Ascending aorta (tissue), 2 donors: ENCODE measurements at regions of chr3 and their contacts with region 1.

Region 1: DNA sequence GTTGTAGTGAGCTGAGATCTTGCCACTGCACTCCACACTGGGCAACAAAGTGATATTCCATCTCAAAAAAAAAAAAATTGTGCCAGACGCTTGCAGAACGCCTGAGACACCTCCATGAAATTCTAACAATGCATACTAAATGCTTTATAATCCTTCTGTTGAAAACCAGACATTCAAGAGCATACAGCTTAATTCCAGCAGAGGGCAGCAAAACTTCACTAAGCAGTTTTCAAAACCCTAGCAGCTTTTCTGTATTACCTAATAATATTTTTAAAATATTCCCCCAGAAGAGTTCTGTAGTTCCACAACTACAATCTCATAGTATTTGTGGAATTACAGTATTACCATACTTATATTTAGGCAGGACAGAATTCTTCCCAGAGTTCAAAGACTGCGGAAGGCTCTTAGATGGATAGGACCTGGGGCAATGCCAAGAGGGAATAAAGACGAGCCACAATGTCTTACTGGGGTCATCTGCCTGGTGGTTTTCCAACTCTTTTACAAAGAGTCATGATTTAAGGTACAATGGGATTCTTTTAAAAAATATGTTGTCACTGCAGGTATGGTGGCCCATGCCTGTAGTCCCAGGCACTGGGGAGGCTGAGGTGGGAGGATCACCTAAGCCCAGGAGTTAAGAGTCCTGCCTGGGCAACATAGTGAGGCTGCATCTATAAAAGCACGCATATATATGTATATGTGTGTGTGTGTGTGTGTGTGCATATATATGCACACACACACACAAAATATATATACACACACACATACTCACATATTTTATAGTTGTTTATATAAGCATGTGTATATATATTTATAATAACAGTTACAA is 19.6 kb upstream of the TASOR start:
- DNase-seq: peak in 1 of 2 donors; percentile 70
- H3K4me3 ChIP-seq: no peak overlapping the region
- H3K27ac ChIP-seq: no peak overlapping the region
- H3K4me1 ChIP-seq: no peaks in the 10 kb centered on the region
- H3K27me3 ChIP-seq: no peaks in the 10 kb centered on the region
- CTCF ChIP-seq: peak; percentile 74 to 91 (median 86)

Region 2: GRCh38 chr3:56468184-56469106 is 234.3 kb before region 1 on chr3 and contains the start of gene ERC2:
- intact Hi-C with region 1: no loop called
- DNase-seq: no peak
- H3K4me3 ChIP-seq: peak within 1 kb of the TSS; percentile 53 to 61
- H3K27ac ChIP-seq: no peak within 1 kb of the TSS
- H3K4me1 ChIP-seq: peaks cover 0 to 5% of the 10 kb centered on the region in 2 donors
- H3K27me3 ChIP-seq: no peaks in the 10 kb centered on the region
- CTCF ChIP-seq: no peak
- total RNA-seq, gene ERC2: 0.11 TPM

Region 3: GRCh38 chr3:56633602-56634535 is 68.8 kb before region 1 on chr3:
- intact Hi-C with region 1: no loop called
- DNase-seq: no peak
- H3K4me3 ChIP-seq: no peak overlapping the region
- H3K27ac ChIP-seq: no peak overlapping the region
- H3K4me1 ChIP-seq: no peaks in the 10 kb centered on the region
- H3K27me3 ChIP-seq: no peaks in the 10 kb centered on the region
- CTCF ChIP-seq: no peak

Region 4: GRCh38 chr3:56682462-56683121 is 20.1 kb before region 1 on chr3:
- intact Hi-C with region 1: no loop called
- DNase-seq: peak in 1 of 2 donors; percentile 82
- H3K4me3 ChIP-seq: peak overlapping the region; percentile 74 to 82
- H3K27ac ChIP-seq: peak overlapping the region; percentile 95 to 99
- H3K4me1 ChIP-seq: peaks cover 0 to 3% of the 10 kb centered on the region in 2 donors
- H3K27me3 ChIP-seq: no peaks in the 10 kb centered on the region
- CTCF ChIP-seq: no peak

Region 5: DNA sequence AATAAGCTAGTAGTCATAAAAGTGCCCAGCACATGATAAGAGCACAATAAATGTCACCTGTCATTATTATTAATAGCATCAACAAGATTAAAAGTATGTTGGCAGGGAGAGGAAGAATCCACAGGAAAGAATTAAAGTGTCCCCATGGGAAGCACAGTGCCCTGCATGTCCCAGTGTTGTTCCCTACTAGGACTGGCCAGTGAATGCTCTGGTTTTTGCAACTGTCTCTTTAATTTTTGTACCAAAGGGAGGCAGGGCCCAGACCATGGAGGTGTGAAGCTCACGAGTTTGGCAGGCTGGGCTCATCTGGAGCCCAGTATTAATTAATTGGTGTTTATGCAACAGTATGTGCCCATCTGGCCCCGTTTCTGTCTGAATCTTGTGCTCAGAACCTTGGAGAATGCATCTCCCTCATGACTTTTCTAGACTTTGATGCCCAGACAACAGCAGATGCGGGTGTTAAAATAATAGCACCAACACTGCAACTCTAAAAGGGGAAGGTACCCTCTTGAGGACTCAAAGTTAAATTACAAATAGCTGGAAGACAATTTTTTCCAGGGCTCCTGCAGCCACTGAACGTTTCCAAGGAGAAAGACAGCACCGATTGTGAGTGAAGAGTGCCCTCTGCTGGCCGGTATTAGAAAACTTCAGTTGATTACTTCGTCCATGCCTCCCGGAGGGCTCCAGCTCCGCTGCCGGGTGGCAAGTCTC is 285.9 kb after region 1 on chr3:
- intact Hi-C with region 1: loop called (anchors 1 kb)
- DNase-seq: peak in 1 of 2 donors; percentile 84
- H3K4me3 ChIP-seq: no peak overlapping the region
- H3K27ac ChIP-seq: no peak overlapping the region
- H3K4me1 ChIP-seq: peaks cover 0 to 10% of the 10 kb centered on the region in 2 donors
- H3K27me3 ChIP-seq: no peaks in the 10 kb centered on the region
- CTCF ChIP-seq: peak; percentile 72 to 88 (median 73)

Region 6: DNA sequence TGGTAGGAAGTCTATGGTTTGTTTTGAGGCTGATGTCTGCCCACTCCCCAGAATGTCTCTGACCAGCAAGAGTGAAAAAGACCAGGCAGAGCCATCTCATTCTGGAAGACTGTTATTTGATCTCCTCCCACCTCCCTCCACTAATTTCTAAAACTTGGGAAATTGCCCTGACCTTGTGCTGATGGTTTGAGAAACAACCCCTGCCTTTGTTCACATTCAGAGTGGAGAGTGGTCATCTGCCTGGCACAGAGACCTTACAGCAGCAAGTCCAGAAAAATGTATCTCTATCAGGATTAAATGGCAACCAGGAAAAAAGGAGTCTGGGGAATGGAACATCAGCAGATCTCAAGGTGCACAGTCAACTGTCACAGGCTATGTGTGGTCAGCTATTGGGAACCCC is 383.5 kb after region 1 on chr3:
- intact Hi-C with region 1: loop called (anchors 10 kb)
- DNase-seq: no peak
- H3K4me3 ChIP-seq: no peak overlapping the region
- H3K27ac ChIP-seq: no peak overlapping the region
- H3K4me1 ChIP-seq: no peaks in the 10 kb centered on the region
- H3K27me3 ChIP-seq: no peaks in the 10 kb centered on the region
- CTCF ChIP-seq: no peak